ENCODE measurements at regions of chr14 and their contacts with region 1.

Region 1: GRCh38 chr14:67526676-67527459 is 6.2 kb upstream of the PLEKHH1 start:
- DNase-seq: peak; percentile 62
- ATAC-seq: peak; percentile 94
- H3K4me3 Mint-ChIP-seq: no peak overlapping the region
- H3K27ac Mint-ChIP-seq: peak overlapping the region; percentile 64; the same call in 1 of the 2 replicates
- H3K4me1 Mint-ChIP-seq: peaks cover 17% of the 10 kb centered on the region
- H3K27me3 Mint-ChIP-seq: peaks cover 2% of the 10 kb centered on the region
- CTCF ChIP-seq: peak; percentile 18; the same call in 1 of the 2 replicates

Region 2: GRCh38 chr14:67426983-67427606 is 99.8 kb before region 1 on chr14:
- CTCF ChIA-PET with region 1: interaction called, 89 read pairs
- POLR2A ChIA-PET with region 1: no interaction called
- DNase-seq: peak; percentile 85
- ATAC-seq: peak; percentile 95
- H3K4me3 Mint-ChIP-seq: peak overlapping the region; percentile 20; the same call in 1 of the 2 replicates
- H3K27ac Mint-ChIP-seq: no peak overlapping the region
- H3K4me1 Mint-ChIP-seq: peaks cover 12% of the 10 kb centered on the region
- H3K27me3 Mint-ChIP-seq: peaks cover 3% of the 10 kb centered on the region; the same call in 1 of the 2 replicates
- CTCF ChIP-seq: peak; percentile 75

Region 3: GRCh38 chr14:67479974-67480373 is 46.9 kb before region 1 on chr14:
- CTCF ChIA-PET with region 1: interaction called, 12 read pairs
- POLR2A ChIA-PET with region 1: no interaction called
- DNase-seq: no peak
- ATAC-seq: no peak
- H3K4me3 Mint-ChIP-seq: no peak overlapping the region
- H3K27ac Mint-ChIP-seq: no peak overlapping the region
- H3K4me1 Mint-ChIP-seq: peaks cover 7% of the 10 kb centered on the region
- H3K27me3 Mint-ChIP-seq: no peaks in the 10 kb centered on the region
- CTCF ChIP-seq: no peak

Region 4: DNA sequence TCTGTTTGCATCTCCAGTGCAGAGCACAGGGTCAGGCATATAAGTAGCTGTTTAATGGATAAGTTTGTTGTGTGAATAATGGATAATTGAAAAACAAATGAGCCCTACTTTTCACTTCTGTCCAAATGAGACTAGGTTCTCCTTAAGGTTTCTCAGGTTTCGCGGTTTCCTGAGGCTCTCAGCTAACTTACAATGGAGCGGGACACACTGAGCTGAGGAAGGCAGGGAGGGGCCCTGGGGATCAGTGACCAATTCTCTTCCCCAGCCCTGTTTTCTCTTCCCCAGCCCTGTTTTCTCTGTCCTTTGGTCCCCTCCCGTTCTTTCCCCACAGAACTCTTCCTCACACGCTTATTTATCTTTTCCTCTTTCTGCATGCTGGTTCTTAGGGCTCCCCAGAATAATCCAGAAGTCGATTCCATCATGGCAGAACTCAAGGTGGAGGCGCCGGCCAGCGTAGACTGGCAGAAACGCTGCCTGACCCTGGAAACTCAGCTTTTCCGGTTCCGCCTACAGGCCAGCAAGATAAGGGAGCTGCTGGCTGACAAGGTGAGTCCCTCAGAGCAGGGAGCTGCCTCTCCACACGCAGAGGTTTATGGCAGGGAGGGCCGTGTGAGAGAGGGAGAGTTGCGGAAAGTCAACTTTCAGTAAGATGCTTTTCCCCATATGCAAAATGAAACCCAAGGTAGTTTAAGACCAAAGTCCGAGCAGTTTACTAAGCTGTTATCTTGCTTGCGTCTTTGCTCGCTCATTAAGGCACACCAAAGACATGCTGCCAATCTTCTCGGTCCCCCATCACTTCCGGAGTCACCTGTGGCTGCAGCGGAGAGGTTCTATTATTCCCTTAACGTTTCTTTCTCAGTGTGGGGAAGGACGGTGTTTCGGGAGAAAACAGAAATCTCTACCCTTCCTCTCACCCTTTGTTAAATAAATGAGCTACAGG is 14.8 kb after region 1 on chr14:
- CTCF ChIA-PET with region 1: interaction called, 64 read pairs
- POLR2A ChIA-PET with region 1: interaction called, 29 read pairs
- DNase-seq: peak; percentile 67
- ATAC-seq: peak; percentile 91
- H3K4me3 Mint-ChIP-seq: peak overlapping the region; percentile 63
- H3K27ac Mint-ChIP-seq: peak overlapping the region; percentile 99
- H3K4me1 Mint-ChIP-seq: peaks cover 50% of the 10 kb centered on the region
- H3K27me3 Mint-ChIP-seq: no peaks in the 10 kb centered on the region
- CTCF ChIP-seq: no peak

Region 5: DNA sequence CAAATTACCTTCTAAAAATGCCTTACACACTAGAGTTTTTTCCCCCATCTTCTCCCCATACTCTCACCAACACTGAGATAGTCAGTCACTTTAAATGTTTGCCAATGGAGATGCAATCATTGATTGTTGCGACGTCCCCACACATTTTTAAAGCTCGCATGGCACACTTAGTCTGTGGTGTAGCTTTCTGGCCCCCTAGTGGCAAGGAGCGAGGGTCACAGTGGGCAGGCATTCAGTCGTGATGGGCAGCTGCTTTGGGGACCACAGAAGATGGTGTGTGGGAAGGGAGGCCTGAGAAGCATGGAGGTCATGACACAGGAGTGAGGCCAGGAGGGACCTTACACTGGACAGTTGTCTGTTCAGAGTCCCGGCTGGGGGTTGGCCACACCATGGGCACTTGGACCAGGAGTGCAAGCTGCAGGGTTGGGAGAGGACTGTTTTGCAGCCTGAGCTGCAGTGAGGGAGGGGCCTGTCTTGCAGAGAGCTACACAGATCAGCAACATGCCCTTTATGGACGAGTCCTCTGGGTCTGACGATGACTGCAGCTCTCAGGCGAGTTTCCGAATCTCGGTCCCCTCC is 44.5 kb after region 1 on chr14:
- CTCF ChIA-PET with region 1: interaction called, 173 read pairs
- POLR2A ChIA-PET with region 1: interaction called, 3 read pairs
- DNase-seq: peak; percentile 72
- ATAC-seq: peak; percentile 85
- H3K4me3 Mint-ChIP-seq: no peak overlapping the region
- H3K27ac Mint-ChIP-seq: no peak overlapping the region
- H3K4me1 Mint-ChIP-seq: peaks cover 9% of the 10 kb centered on the region
- H3K27me3 Mint-ChIP-seq: no peaks in the 10 kb centered on the region
- CTCF ChIP-seq: peak; percentile 85

Region 6: DNA sequence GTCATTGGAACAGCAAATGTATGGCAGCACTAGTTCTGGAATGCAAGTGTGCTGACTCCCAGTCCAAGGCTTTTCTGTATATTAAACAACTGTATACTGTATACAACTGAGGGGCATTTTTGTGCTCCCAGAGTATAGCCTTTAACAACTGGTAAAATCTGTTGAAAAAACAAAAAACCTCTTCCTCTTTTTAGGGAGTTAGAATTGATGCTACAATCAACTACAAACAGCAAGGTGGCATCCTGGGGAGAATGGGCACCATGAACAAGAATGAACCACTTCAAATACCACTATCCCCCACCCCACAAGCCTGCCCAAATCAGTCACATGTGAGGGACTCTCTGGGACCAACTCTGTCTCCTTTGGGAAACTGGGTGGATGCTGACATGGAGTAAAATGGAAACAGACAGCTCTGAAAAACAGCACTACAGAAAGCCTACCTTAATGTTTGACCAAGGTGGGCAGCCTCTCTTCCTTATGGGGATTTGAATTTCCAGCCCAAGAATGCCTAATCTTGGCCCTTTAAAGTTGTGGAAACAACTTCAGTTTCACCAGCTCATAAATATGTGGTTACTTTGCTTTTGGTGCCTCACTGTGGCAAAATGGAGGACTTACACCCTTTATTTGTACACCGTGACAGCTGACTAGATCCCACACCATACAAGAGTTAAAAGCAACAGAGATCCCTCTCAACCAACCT is 140.0 kb after region 1 on chr14:
- CTCF ChIA-PET with region 1: interaction called, 15 read pairs
- POLR2A ChIA-PET with region 1: interaction called, 3 read pairs
- DNase-seq: no peak
- ATAC-seq: peak; percentile 93
- H3K4me3 Mint-ChIP-seq: no peak overlapping the region
- H3K27ac Mint-ChIP-seq: peak overlapping the region; percentile 85
- H3K4me1 Mint-ChIP-seq: peaks cover 13% of the 10 kb centered on the region
- H3K27me3 Mint-ChIP-seq: no peaks in the 10 kb centered on the region
- CTCF ChIP-seq: no peak

Measured in WTC11 (cell line).